Pancreas (tissue), 10 donors: ENCODE measurements at regions of chr11 and their contacts with region 1.

Region 1: GRCh38 chr11:102293873-102294601 is 23.2 kb upstream of the BIRC3 start:
- DNase-seq: no peak
- ATAC-seq: peak; percentile 81 to 97 (median 94)
- H3K4me3 ChIP-seq: peak overlapping the region in 1 of 4 donors; percentile 6
- H3K27ac ChIP-seq: no peak overlapping the region
- H3K4me1 ChIP-seq: no peaks in the 10 kb centered on the region
- H3K27me3 ChIP-seq: no peaks in the 10 kb centered on the region
- CTCF ChIP-seq: peak; percentile 35 to 58 (median 50)

Region 2: DNA sequence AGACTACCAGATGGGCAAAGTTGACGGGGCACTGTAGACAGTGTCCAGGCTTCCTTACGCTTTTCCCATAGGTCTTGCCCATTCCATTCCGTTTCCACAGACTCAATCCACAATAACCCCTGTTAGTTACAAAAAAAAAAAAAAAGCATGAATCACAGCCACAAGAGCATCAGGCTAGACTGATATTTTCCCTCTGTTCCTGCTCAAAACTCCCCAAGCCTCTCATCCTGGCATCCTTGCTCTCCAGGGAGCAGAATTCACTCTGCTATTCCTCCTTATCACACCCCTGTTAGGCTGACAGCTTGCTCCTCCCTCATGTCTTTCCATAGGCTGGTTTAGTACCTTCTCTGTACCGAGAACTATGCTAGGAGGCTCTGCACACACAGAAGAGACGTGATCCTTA is 116.3 kb after region 1 on chr11:
- intact Hi-C with region 1: no loop called
- DNase-seq: no peak
- ATAC-seq: no peak
- H3K4me3 ChIP-seq: no peak overlapping the region
- H3K27ac ChIP-seq: no peak overlapping the region
- H3K4me1 ChIP-seq: no peaks in the 10 kb centered on the region
- H3K27me3 ChIP-seq: no peaks in the 10 kb centered on the region
- CTCF ChIP-seq: no peak

Region 3: GRCh38 chr11:102664001-102664752 is 370.1 kb after region 1 on chr11:
- intact Hi-C with region 1: loop called in 1 of 3 experiments (anchors 5 kb)
- DNase-seq: no peak
- ATAC-seq: no peak
- H3K4me3 ChIP-seq: no peak overlapping the region
- H3K27ac ChIP-seq: no peak overlapping the region
- H3K4me1 ChIP-seq: no peaks in the 10 kb centered on the region
- H3K27me3 ChIP-seq: no peaks in the 10 kb centered on the region
- CTCF ChIP-seq: no peak